ENCODE measurements at regions of chr7 and their contacts with region 1.

Region 1: GRCh38 chr7:158976849-158977593 is 120.7 kb downstream of the DYNC2I1 start:
- H3K4me3 ChIP-seq: no peak overlapping the region
- H3K27ac ChIP-seq: no peak overlapping the region
- H3K4me1 ChIP-seq: no peaks in the 10 kb centered on the region
- CTCF ChIP-seq: peak; percentile 40; the same call in 1 of the 2 replicates

Region 2: DNA sequence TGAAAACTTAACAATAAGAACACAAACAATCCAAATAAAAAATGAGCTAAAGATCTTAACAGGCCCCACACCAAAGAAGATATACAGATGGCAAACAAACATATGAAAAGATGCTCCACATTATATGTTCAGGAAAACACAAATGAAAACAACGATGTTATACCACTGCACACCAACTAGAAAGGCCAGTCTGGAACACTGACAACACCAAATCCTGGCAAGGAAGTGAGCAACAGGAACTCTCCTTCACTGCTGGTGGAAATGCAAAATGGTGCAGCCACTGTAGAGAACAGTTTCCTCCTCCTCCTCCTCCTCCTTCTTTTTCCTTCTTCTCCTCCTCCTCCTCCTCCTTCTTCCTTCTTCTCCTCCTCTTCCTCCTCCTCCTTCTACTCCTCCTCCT is 260.2 kb before region 1 on chr7:
- CTCF ChIA-PET with region 1: no interaction called
- POLR2A ChIA-PET with region 1: no interaction called
- H3K4me3 ChIP-seq: no peak overlapping the region
- H3K27ac ChIP-seq: no peak overlapping the region
- H3K4me1 ChIP-seq: no peaks in the 10 kb centered on the region
- CTCF ChIP-seq: no peak

Region 3: DNA sequence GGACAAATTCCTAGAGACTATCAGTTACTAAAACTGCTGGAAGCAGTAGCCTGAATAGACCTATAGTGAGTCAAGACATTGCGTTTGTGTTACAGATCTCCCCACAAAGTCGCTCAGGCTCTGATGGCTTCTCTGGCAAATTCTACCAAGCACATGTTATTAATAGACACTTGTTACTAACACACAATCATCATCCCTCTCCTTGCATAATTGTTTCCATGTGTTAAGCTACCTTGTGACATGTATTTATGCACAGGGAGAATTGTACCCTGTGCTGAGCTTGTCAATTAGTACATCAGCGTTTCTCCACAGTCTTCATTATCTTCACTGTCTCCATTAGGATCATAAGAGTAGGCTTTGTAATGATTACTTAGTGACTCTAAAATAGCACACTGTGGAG is 89.4 kb before region 1 on chr7:
- CTCF ChIA-PET with region 1: interaction called, 15 read pairs
- POLR2A ChIA-PET with region 1: no interaction called
- H3K4me3 ChIP-seq: no peak overlapping the region
- H3K27ac ChIP-seq: no peak overlapping the region
- H3K4me1 ChIP-seq: no peaks in the 10 kb centered on the region
- CTCF ChIP-seq: no peak

Region 4: DNA sequence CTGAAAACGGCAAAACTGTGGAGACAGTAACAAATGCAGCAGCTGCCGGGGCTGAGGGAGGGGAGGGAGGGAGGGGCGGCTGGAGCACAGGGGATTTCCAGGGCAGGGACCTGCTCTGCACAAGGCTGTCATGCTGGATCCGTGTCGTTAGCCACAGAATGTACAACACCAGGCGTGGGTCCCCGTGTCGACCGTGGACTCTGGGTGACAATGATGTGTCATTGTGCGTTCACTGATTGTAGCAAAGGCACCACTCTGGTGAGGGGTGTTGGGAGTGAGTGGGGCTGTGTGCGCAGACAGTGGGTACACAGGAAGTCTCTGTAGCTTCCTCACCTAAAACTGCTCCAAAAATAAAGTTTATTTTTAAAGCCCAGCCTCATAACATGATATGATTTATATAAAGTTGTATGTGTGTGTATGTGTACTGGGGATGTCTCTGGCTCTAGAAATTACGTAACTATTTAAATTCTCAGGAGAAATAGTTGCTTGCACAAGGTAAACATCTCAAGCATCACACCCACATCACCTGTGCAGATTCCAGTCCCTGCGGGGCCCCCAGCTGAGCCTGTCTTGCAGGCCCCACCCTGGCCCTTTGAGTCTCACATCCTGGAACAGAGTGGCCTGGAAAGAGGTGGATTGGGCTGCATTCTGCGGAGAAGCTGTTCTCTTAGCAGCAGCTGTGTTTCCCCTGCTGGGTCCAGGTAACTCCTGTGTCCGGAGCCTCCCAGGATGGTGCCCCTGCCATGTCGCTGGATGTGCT is 15.0 kb after region 1 on chr7:
- CTCF ChIA-PET with region 1: interaction called, 12 read pairs
- POLR2A ChIA-PET with region 1: no interaction called
- H3K4me3 ChIP-seq: no peak overlapping the region
- H3K27ac ChIP-seq: no peak overlapping the region
- H3K4me1 ChIP-seq: no peaks in the 10 kb centered on the region
- CTCF ChIP-seq: no peak

Region 5: GRCh38 chr7:159094023-159094740 is 117.2 kb after region 1 on chr7:
- CTCF ChIA-PET with region 1: no interaction called
- POLR2A ChIA-PET with region 1: no interaction called
- H3K4me3 ChIP-seq: no peak overlapping the region
- H3K27ac ChIP-seq: no peak overlapping the region
- H3K4me1 ChIP-seq: no peaks in the 10 kb centered on the region
- CTCF ChIP-seq: no peak

Measured in HEK293 (cell line).